SK-N-SH (cell line): ENCODE measurements at regions of chr10 and their contacts with region 1.

Region 1: DNA sequence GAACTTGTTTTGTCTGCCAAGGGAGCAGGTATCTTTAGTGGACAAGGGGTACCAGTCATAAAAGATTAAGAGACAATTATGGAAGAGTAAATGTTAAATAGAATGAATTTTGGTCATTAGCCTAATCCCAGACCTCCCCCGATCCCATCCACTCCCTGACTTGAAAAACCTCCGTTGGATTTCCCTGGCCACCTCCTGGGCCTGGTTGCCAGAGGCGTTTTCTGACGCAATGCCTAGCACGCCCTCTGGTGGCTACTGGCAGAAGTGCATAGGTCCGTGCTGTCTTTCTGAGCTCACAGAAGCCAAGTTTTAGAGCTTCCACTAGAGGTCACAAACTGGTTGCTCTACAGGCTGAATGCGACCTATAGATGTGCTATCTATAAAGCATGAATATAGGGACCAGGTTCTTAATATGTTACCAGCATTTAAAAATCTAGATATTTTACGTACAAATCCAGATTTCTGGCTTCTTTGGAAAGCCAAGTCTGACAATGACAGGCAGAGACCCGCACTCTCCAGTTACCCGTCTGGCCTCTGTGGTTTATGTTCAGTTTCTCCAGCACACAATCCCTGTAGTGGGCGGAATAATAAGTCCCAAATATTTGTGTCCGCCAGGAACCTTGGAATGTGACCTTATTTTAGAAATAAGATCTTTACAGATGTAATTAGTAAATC is 39.8 kb downstream of the SPOCK2 start:
- DNase-seq: peak; percentile 88
- H3K4me3 ChIP-seq: peak overlapping the region in 1 of 2 experiments; percentile 46; a peak in 1 of 4 replicates
- H3K27ac ChIP-seq: no peak overlapping the region
- H3K4me1 ChIP-seq: peaks cover 0 to 7% of the 10 kb centered on the region in 2 experiments; a peak in 1 of 4 replicates
- H3K27me3 ChIP-seq: no peaks in the 10 kb centered on the region
- CTCF ChIP-seq: peak; percentile 100
- EP300 ChIP-seq: peak in 1 of 2 experiments; percentile 31; a peak in 1 of 4 replicates
- RAD21 ChIP-seq: peak; percentile 100

Region 2: DNA sequence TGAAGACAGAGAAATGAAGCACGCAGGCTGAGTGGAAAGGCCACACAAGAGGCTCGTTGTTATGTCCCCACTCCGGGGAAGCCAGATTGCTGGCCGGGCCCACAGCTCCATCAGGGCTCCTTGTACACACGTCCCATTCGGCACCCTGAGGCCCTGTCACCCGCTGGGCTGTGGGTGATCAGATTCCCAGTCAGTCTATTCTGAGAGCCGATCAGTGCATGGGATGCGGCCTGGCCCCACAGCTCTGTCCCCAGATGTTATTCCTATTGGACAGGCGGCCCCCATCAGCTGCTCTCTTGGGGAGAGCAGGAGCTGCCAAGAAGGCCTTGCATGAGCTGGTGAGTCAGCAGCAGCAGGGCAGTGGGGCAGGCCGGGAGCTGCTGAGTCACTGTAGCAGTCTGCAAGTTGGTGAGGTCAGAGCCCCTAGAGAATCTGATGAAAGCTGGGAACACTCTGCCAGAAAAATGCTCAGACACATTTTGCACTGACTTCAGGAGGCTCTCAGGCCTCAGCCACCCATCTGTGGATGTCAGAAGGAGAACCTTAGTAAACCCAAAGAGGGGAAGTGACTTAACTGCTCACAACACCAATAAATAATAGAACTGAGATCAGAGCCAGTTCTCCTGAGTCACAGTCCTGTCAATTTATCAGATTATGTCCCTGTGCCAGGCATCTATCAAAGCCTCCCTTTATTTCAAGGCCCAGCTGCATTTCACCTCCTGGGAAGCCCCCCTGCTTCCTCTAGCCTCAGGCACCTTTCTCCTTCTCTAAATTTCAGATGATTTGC is 188.2 kb before region 1 on chr10:
- CTCF ChIA-PET with region 1: no interaction called
- POLR2A ChIA-PET with region 1: no interaction called
- DNase-seq: peak; percentile 70
- H3K4me3 ChIP-seq: no peak overlapping the region; a peak in 1 of 4 replicates
- H3K27ac ChIP-seq: peak overlapping the region; percentile 90 to 99
- H3K4me1 ChIP-seq: peaks cover 15 to 29% of the 10 kb centered on the region in 2 experiments; a peak in 3 of 4 replicates
- H3K27me3 ChIP-seq: no peaks in the 10 kb centered on the region
- CTCF ChIP-seq: no peak
- EP300 ChIP-seq: peak; percentile 45 to 88
- RAD21 ChIP-seq: no peak

Region 3: GRCh38 chr10:71888623-71889387 is 159.8 kb before region 1 on chr10:
- CTCF ChIA-PET with region 1: interaction called, 250 read pairs
- POLR2A ChIA-PET with region 1: no interaction called
- DNase-seq: peak; percentile 85
- H3K4me3 ChIP-seq: peak overlapping the region; percentile 51 to 74
- H3K27ac ChIP-seq: peak overlapping the region in 1 of 2 experiments; percentile 39; a peak in 2 of 4 replicates
- H3K4me1 ChIP-seq: peaks cover 0 to 7% of the 10 kb centered on the region in 2 experiments; a peak in 1 of 4 replicates
- H3K27me3 ChIP-seq: no peaks in the 10 kb centered on the region
- CTCF ChIP-seq: peak; percentile 21; the same call in 1 of the 2 replicates
- EP300 ChIP-seq: no peak
- RAD21 ChIP-seq: no peak

Region 4: GRCh38 chr10:71963756-71964668 is 84.6 kb before region 1 on chr10 and contains the start of gene CHST3:
- CTCF ChIA-PET with region 1: interaction called, 110 read pairs
- POLR2A ChIA-PET with region 1: no interaction called
- DNase-seq: peak; percentile 84
- H3K4me3 ChIP-seq: peak within 1 kb of the TSS; percentile 75 to 99
- H3K27ac ChIP-seq: peak within 1 kb of the TSS; percentile 28 to 32; a peak in 3 of 4 replicates
- H3K4me1 ChIP-seq: peaks cover 18 to 25% of the 10 kb centered on the region in 2 experiments; a peak in 3 of 4 replicates
- H3K27me3 ChIP-seq: no peaks in the 10 kb centered on the region
- CTCF ChIP-seq: no peak
- EP300 ChIP-seq: no peak
- RAD21 ChIP-seq: no peak
- polyA plus RNA-seq, gene CHST3: 6.0 and 6.1 TPM in 2 replicates

Region 5: GRCh38 chr10:72013202-72013945 is 35.2 kb before region 1 on chr10:
- CTCF ChIA-PET with region 1: interaction called, 19 read pairs
- POLR2A ChIA-PET with region 1: no interaction called
- DNase-seq: peak; percentile 88
- H3K4me3 ChIP-seq: no peak overlapping the region
- H3K27ac ChIP-seq: peak overlapping the region in 1 of 2 experiments; percentile 90; a peak in 3 of 4 replicates
- H3K4me1 ChIP-seq: peaks cover 13 to 54% of the 10 kb centered on the region in 2 experiments
- H3K27me3 ChIP-seq: no peaks in the 10 kb centered on the region
- CTCF ChIP-seq: no peak
- EP300 ChIP-seq: peak in 1 of 2 experiments; percentile 38; a peak in 1 of 4 replicates
- RAD21 ChIP-seq: peak; percentile 20; the same call in 1 of the 2 replicates

Region 6: DNA sequence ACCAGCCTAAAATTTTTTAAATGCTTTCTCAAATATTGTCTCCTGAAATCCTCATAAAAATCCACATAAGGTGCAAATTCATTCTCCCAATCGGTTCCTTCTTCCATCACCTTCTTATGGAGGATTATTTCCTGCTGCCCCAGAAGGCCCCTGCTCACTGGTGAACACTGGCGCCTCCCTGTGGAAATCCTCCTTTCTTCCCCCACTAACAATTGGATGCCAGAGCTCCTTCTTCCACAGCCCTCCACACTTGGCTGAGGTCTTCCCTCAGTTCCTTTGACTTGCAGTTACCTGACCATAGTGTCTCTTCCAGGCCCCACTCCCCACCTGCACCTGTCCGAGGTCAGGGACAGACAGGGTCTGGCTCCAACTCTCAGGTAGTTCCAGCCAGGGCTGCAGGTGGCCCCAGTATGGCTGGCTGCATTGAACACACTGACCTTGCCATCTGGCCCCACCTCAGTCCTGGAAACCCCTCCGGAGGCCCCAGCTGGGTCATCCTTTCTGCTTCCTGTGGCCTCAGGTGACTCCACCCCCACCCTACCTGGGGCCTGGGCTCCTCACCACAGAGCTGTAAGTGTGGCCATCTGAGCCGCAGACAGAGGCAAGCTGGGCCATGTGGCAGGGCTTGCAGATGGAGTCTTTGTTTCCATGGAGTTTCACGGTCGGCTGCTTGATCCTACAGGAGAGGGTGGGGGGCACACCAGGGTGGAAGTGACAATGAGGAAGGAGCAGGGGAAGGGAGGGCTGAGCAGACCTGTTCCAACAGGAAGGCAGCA is 21.4 kb after region 1 on chr10:
- CTCF ChIA-PET with region 1: interaction called, 55 read pairs
- POLR2A ChIA-PET with region 1: no interaction called
- DNase-seq: no peak
- H3K4me3 ChIP-seq: no peak overlapping the region
- H3K27ac ChIP-seq: no peak overlapping the region
- H3K4me1 ChIP-seq: peaks cover 0 to 47% of the 10 kb centered on the region in 2 experiments; a peak in 1 of 4 replicates
- H3K27me3 ChIP-seq: no peaks in the 10 kb centered on the region
- CTCF ChIP-seq: no peak; the same call in 1 of the 2 replicates
- EP300 ChIP-seq: no peak
- RAD21 ChIP-seq: peak; percentile 16; the same call in 1 of the 2 replicates

Region 7: GRCh38 chr10:72331601-72332422 is 283.2 kb after region 1 on chr10:
- CTCF ChIA-PET with region 1: interaction called, 72 read pairs
- POLR2A ChIA-PET with region 1: no interaction called
- DNase-seq: peak; percentile 94
- H3K4me3 ChIP-seq: no peak overlapping the region; a peak in 1 of 4 replicates
- H3K27ac ChIP-seq: peak overlapping the region; percentile 28 to 99; a peak in 3 of 4 replicates
- H3K4me1 ChIP-seq: peaks cover 16 to 86% of the 10 kb centered on the region in 2 experiments
- H3K27me3 ChIP-seq: no peaks in the 10 kb centered on the region
- CTCF ChIP-seq: 0 out of 2 replicates have a peak, but pooled peaks have one; percentile 20
- EP300 ChIP-seq: peak; percentile 37 to 84; a peak in 2 of 4 replicates
- RAD21 ChIP-seq: peak; percentile 27